Aorta (tissue), 5 donors: ENCODE measurements at regions of chr10 and their contacts with region 1.

Region 1: GRCh38 chr10:75235375-75236177 is at the start of gene COMTD1:
- DNase-seq: peak; percentile 95 to 97
- ATAC-seq: peak; percentile 94
- H3K4me3 ChIP-seq: peak within 1 kb of the TSS; percentile 49 to 78
- H3K27ac ChIP-seq: peak within 1 kb of the TSS in 1 of 2 donors; percentile 39
- H3K4me1 ChIP-seq: no peaks in the 10 kb centered on the region
- H3K27me3 ChIP-seq: no peaks in the 10 kb centered on the region
- total RNA-seq, gene COMTD1: 12.9 to 14.3 TPM

Region 2: GRCh38 chr10:74244097-74244685 is 991.4 kb before region 1 on chr10:
- intact Hi-C with region 1: loop called (anchors 5 kb)
- DNase-seq: no peak
- ATAC-seq: no peak
- H3K4me3 ChIP-seq: no peak overlapping the region
- H3K27ac ChIP-seq: no peak overlapping the region
- H3K4me1 ChIP-seq: no peaks in the 10 kb centered on the region
- H3K27me3 ChIP-seq: no peaks in the 10 kb centered on the region

Region 3: GRCh38 chr10:74249865-74250264 is 985.7 kb before region 1 on chr10:
- intact Hi-C with region 1: loop called in 1 of 2 experiments (anchors 5 kb)
- DNase-seq: no peak
- ATAC-seq: no peak
- H3K4me3 ChIP-seq: no peak overlapping the region
- H3K27ac ChIP-seq: no peak overlapping the region
- H3K4me1 ChIP-seq: no peaks in the 10 kb centered on the region
- H3K27me3 ChIP-seq: no peaks in the 10 kb centered on the region

Region 4: GRCh38 chr10:75111367-75111906 is 124.1 kb before region 1 on chr10 and contains the start of gene SAMD8:
- intact Hi-C with region 1: loop called (anchors 2 to 5 kb)
- DNase-seq: peak; percentile 99
- ATAC-seq: peak; percentile 96
- H3K4me3 ChIP-seq: peak within 1 kb of the TSS; percentile 36 to 79
- H3K27ac ChIP-seq: peak within 1 kb of the TSS; percentile 84 to 88
- H3K4me1 ChIP-seq: peaks cover 0 to 4% of the 10 kb centered on the region in 2 donors
- H3K27me3 ChIP-seq: no peaks in the 10 kb centered on the region
- total RNA-seq, gene SAMD8: 33.6 to 37.5 TPM

Region 5: DNA sequence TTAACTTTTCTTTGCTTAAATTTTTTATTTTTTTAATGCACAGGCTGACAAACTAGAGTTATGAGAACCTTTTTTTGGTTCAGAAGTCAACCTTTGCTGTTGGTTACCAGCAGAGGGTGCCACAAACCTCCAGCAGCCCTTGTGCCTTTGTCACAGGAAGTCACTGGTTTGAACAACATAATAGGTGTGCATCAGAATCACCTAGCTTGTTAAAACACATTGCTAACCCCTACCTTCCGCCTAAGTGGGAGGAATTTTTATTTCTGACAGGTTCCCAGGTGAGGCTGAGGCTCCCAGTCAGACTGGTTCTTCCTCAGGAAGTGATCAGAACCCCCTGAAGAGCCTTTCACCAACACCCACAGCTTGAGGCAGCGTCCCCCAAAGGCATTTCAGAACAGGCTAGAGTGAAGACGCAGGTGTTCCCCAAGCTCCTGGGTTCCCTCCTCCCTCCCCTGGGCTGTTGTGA is 47.6 kb before region 1 on chr10:
- intact Hi-C with region 1: loop called (anchors 2 to 5 kb)
- DNase-seq: no peak
- ATAC-seq: no peak
- H3K4me3 ChIP-seq: no peak overlapping the region
- H3K27ac ChIP-seq: no peak overlapping the region
- H3K4me1 ChIP-seq: no peaks in the 10 kb centered on the region
- H3K27me3 ChIP-seq: no peaks in the 10 kb centered on the region